Cardiac septum (tissue), 1 donor: ENCODE measurements at regions of chr15 and their contacts with region 1.

Region 1: DNA sequence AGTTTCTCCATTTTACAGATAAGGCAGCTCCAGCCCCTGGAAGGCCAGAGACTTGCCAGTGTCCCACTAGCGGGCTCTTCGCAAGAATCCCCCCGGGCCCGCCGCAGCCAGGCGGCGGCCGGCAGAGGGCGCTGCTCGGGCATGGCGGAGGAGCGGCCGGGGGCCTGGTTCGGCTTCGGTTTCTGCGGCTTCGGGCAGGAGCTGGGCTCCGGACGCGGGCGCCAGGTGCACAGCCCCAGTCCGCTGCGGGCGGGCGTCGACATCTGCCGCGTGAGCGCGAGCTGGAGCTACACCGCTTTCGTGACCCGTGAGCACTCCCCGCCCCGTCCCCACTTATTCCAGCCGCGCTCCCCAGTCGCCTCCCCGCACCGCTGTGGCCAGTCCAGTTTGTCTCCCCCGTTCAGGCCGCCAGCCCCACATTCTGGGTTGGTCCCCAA is 1.9 kb downstream of the RCCD1 start:
- DNase-seq: peak; percentile 88

Region 2: GRCh38 chr15:90994417-90995311 is 38.1 kb after region 1 on chr15 and contains the start of gene PRC1:
- intact Hi-C with region 1: loop called (anchors 2 kb)
- DNase-seq: peak; percentile 100
- total RNA-seq, gene PRC1: 3.1 TPM

Region 3: GRCh38 chr15:91022075-91022835 is 65.6 kb after region 1 on chr15 and contains the start of gene VPS33B:
- intact Hi-C with region 1: loop called (anchors 2 kb)
- DNase-seq: peak; percentile 94
- total RNA-seq, gene VPS33B: 6.8 TPM

Region 4: GRCh38 chr15:91032919-91033803 is 76.5 kb after region 1 on chr15:
- intact Hi-C with region 1: no loop called
- DNase-seq: peak; percentile 84

Region 5: DNA sequence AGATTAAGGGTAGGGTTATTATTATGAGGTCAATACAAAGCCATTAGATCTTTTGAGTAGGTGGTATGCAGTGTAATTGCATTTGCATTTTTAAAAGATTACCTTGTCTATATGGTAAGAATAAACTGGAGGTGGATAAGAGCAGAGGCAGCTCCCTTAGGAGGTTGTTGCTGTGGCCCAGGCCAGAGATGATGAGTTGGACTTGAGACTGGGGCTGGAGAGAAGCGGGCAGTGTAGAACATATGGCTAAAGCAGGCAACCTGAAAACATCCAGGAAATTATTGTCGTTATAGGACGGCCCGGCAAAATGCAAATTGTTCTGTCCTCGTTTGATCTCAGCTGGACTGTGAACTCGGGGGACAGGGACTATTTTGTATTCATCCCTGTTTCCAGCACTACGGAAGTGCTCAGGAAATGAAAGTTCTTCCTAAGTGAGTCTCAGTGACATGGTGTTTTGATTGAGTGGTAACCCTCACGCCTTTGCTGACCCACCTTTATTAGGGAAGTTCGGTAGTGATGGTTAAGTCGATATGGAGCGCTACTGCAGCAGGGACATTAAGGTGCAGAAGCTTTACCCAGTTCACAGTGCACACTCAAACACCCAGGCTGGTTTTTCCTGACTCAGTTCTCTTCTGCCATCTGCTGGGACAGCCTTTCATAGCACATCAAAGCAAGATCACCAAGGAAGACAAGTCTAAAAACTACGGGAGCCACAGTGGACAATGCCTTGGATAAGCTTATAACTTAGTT is 92.9 kb after region 1 on chr15:
- intact Hi-C with region 1: loop called (anchors 2 kb)
- DNase-seq: no peak

Region 6: GRCh38 chr15:91271565-91272153 is 315.0 kb after region 1 on chr15:
- intact Hi-C with region 1: loop called (anchors 2 kb)
- DNase-seq: no peak